PC-9 (cell line): ENCODE measurements at regions of chr12 and their contacts with region 1.

Region 1: DNA sequence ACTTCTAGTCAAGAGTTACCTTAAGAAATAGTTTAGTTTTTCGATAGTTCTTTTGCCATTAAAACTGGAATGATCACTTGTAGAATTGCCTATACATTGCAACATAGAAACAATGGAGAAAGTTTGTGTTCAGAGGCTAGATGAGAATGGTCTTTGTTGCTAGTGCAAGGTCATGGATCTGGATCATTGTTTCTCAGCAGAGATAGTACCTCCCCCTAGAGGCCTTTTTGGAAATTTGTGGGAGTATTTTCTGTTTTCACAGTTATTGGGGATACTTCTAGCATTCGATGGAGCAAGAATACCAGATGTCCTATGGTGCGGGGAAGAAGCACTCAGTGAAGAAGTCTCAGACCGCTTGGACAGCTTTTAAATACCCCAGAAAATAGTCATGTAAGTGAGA is 138.8 kb upstream of the HMGA2 start:
- DNase-seq: peak in 1 of 2 experiments; percentile 45
- H3K4me3 ChIP-seq: no peak overlapping the region
- H3K27ac ChIP-seq: no peak overlapping the region
- H3K4me1 ChIP-seq: no peaks in the 10 kb centered on the region
- H3K27me3 ChIP-seq: no peaks in the 10 kb centered on the region
- CTCF ChIP-seq: peak; percentile 63

Region 2: DNA sequence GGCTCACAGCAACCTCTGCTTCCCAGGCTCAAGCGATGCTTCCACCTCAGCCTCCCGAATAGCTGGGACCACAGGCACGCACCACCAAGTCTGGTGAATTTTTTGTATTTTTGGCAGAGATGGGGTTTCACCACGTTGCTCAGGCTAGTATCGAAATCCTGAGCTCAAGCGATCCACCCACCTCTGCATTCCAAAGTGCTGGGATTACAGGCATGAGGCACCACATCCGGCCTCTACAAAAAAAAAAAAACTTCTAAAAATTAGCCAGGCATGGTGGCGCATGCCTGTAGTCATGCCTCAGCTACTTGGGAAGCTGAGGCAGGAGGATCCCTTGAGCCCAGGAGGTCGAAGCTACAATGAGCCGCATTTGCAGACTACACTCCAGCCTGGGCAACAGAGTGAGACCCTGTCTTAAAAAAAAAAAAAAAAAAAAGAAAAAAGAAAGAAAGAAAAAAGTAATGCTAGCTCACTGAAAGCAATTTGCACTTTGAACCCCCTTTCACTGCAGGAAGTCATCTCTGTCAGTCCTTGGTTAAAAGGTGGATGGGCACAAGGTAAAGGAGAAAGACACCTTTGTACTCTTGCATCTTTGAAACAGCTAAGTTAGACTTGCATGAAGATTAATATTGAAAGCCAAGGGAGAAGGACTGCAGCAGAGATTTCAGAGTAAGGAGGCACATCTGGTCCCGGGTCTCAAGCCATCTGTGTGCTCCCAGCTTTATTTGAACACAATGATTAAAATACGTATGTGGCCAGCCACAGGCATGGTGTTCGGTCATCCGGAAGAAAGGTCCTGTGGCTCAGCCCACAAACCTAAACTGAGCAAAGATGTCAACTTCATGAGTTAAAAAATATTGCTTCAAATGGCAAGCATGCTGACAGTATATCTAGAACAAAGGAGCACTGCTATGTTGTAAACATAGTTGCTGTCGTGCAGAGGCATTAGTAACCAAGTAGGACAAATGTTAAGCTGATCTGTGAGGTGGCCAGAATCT is 34.9 kb after region 1 on chr12:
- CTCF ChIA-PET with region 1: no interaction called
- POLR2A ChIA-PET with region 1: interaction called, 11 read pairs
- intact Hi-C with region 1: no loop called
- DNase-seq: no peak
- H3K4me3 ChIP-seq: no peak overlapping the region
- H3K27ac ChIP-seq: no peak overlapping the region
- H3K4me1 ChIP-seq: no peaks in the 10 kb centered on the region
- H3K27me3 ChIP-seq: no peaks in the 10 kb centered on the region
- CTCF ChIP-seq: no peak